CD4-positive, alpha-beta memory T cell (primary cell): ENCODE measurements at regions of chr18 and their contacts with region 1.

Region 1: GRCh38 chr18:49041435-49042245 is 90.9 kb upstream of the SMAD7 start:
- DNase-seq: peak in 4 of 5 donors; percentile 34 to 52 (median 42)
- H3K4me3 ChIP-seq: no peak overlapping the region
- H3K4me3 Mint-ChIP-seq: no peak overlapping the region
- H3K27ac ChIP-seq: no peak overlapping the region
- H3K27ac Mint-ChIP-seq: peak overlapping the region in 1 of 7 donors; percentile 8
- H3K4me1 ChIP-seq: no peaks in the 10 kb centered on the region
- H3K4me1 Mint-ChIP-seq: peaks cover 0 to 6% (median 0%) of the 10 kb centered on the region in 4 donors
- H3K27me3 ChIP-seq: no peaks in the 10 kb centered on the region
- H3K27me3 Mint-ChIP-seq: no peaks in the 10 kb centered on the region

Region 2: GRCh38 chr18:49052891-49053644 is 11.4 kb after region 1 on chr18:
- CTCF ChIA-PET with region 1: interaction called, 26 read pairs
- POLR2A ChIA-PET with region 1: no interaction called
- intact Hi-C with region 1: no loop called
- DNase-seq: peak in 4 of 5 donors; percentile 5 to 24 (median 18)
- H3K4me3 ChIP-seq: no peak overlapping the region
- H3K4me3 Mint-ChIP-seq: peak overlapping the region; percentile 11 to 70 (median 46)
- H3K27ac ChIP-seq: no peak overlapping the region
- H3K27ac Mint-ChIP-seq: peak overlapping the region in 6 of 7 donors; percentile 14 to 89 (median 52)
- H3K4me1 ChIP-seq: peaks cover 14% of the 10 kb centered on the region
- H3K4me1 Mint-ChIP-seq: peaks cover 18 to 43% (median 29%) of the 10 kb centered on the region in 4 donors
- H3K27me3 ChIP-seq: no peaks in the 10 kb centered on the region
- H3K27me3 Mint-ChIP-seq: no peaks in the 10 kb centered on the region

Region 3: GRCh38 chr18:49459404-49460171 is 417.9 kb after region 1 on chr18:
- CTCF ChIA-PET with region 1: no interaction called
- POLR2A ChIA-PET with region 1: no interaction called
- intact Hi-C with region 1: no loop called
- DNase-seq: peak in 4 of 5 donors; percentile 16 to 53 (median 26)
- H3K4me3 ChIP-seq: peak overlapping the region; percentile 43 to 89
- H3K4me3 Mint-ChIP-seq: peak overlapping the region; percentile 86 to 95 (median 91)
- H3K27ac ChIP-seq: peak overlapping the region; percentile 85
- H3K27ac Mint-ChIP-seq: peak overlapping the region; percentile 67 to 93 (median 90)
- H3K4me1 ChIP-seq: peaks cover 45% of the 10 kb centered on the region
- H3K4me1 Mint-ChIP-seq: peaks cover 34 to 61% (median 44%) of the 10 kb centered on the region in 4 donors
- H3K27me3 ChIP-seq: no peaks in the 10 kb centered on the region
- H3K27me3 Mint-ChIP-seq: no peaks in the 10 kb centered on the region